ENCODE measurements at regions of chr3 and their contacts with region 1.

Region 1: GRCh38 chr3:132641837-132642538 is 17.6 kb downstream of the ACAD11 start:
- DNase-seq: no peak
- H3K4me3 Mint-ChIP-seq: no peak overlapping the region
- H3K27ac Mint-ChIP-seq: no peak overlapping the region
- H3K4me1 Mint-ChIP-seq: peaks cover 9% of the 10 kb centered on the region
- H3K27me3 Mint-ChIP-seq: no peaks in the 10 kb centered on the region
- CTCF ChIP-seq: peak; percentile 72

Region 2: DNA sequence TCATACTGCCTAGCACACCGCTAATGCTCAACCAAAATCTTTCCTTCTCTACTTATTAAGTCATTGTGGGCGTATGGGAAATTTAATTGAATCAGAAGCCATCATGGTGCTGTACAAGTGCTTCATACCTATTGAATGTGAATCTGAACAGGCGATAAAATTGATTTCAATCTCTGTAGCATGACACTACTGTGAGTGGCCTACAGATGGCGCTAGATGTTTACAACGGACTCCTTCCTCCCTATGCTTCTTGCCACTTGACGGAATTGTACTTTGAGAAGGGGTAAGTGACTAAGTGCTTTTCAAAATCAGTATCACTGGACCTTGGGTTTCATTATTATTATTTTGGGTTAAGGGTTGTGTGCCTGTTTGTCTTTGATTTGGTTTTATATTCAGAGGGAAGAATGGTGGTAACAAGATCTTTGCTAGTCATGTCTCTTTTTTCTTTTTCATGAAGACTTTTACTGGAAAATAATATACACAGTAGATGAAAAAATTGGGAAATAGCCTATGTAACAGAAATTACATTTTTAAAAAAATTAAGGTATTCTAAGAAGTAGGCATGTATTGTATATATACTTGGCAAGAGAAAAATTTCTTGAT is 289.3 kb before region 1 on chr3:
- CTCF ChIA-PET with region 1: no interaction called
- intact Hi-C with region 1: loop called (anchors 5 kb)
- DNase-seq: peak; percentile 84
- H3K4me3 Mint-ChIP-seq: no peak overlapping the region
- H3K27ac Mint-ChIP-seq: no peak overlapping the region
- H3K4me1 Mint-ChIP-seq: no peaks in the 10 kb centered on the region
- H3K27me3 Mint-ChIP-seq: no peaks in the 10 kb centered on the region
- CTCF ChIP-seq: peak; percentile 91

Region 3: GRCh38 chr3:132535575-132536441 is 106.2 kb before region 1 on chr3:
- CTCF ChIA-PET with region 1: interaction called, 46 read pairs
- intact Hi-C with region 1: loop called (anchors 1 kb)
- DNase-seq: peak; percentile 73
- H3K4me3 Mint-ChIP-seq: no peak overlapping the region
- H3K27ac Mint-ChIP-seq: no peak overlapping the region
- H3K4me1 Mint-ChIP-seq: no peaks in the 10 kb centered on the region
- H3K27me3 Mint-ChIP-seq: no peaks in the 10 kb centered on the region
- CTCF ChIP-seq: peak; percentile 84

Region 4: DNA sequence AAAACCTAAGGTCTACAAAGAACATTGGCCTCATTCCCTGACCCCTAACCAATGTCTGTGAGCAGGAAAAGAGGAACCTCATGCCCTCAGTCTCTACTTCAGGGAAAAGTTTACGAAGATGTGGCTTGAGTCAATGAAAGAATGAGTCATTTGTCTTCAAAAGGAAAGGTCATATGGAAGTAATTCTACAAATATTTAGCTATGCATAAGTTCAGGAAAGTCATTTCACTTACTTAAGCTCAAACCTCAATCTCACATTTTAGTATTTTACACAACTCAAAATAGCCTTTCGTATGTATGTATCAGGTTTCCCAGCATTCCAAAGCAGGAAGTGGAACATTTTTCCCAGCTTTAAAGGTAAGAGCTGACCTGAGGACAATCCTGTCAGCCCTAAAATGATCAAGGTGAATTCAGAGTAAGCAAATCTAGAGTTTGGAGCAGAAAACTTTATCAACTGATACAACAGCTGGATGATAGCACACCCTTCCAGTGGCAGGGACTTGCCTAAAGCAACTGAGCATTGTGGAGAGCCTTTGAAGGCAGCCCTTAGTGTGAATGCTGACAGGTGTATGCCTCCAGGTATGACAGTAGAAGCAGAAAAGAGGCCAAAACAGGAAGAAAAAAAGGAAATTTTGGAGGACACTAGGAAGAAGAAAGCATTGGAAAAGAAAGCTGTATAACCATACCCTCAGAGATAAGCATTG is 98.8 kb before region 1 on chr3:
- CTCF ChIA-PET with region 1: interaction called, 14 read pairs
- intact Hi-C with region 1: no loop called
- DNase-seq: peak; percentile 17
- H3K4me3 Mint-ChIP-seq: no peak overlapping the region
- H3K27ac Mint-ChIP-seq: peak overlapping the region; percentile 3
- H3K4me1 Mint-ChIP-seq: peaks cover 20% of the 10 kb centered on the region
- H3K27me3 Mint-ChIP-seq: no peaks in the 10 kb centered on the region
- CTCF ChIP-seq: no peak

Region 5: GRCh38 chr3:132595014-132595413 is 47.0 kb before region 1 on chr3:
- CTCF ChIA-PET with region 1: interaction called, 5 read pairs
- intact Hi-C with region 1: loop called (anchors 5 kb)
- DNase-seq: no peak
- H3K4me3 Mint-ChIP-seq: no peak overlapping the region
- H3K27ac Mint-ChIP-seq: no peak overlapping the region
- H3K4me1 Mint-ChIP-seq: peaks cover 29% of the 10 kb centered on the region
- H3K27me3 Mint-ChIP-seq: no peaks in the 10 kb centered on the region
- CTCF ChIP-seq: no peak